ENCODE measurements at regions of chr7 and their contacts with region 1.

Region 1: GRCh38 chr7:38335492-38336147 is 62.2 kb upstream of the TARP start:
- DNase-seq: peak; percentile 90
- ATAC-seq: peak; percentile 69 to 92 (median 79)
- H3K4me3 ChIP-seq: peak overlapping the region; percentile 70
- H3K4me3 Mint-ChIP-seq: peak overlapping the region; percentile 93
- H3K27ac ChIP-seq: peak overlapping the region; percentile 80
- H3K27ac Mint-ChIP-seq: peak overlapping the region; percentile 90 to 93
- H3K4me1 ChIP-seq: peaks cover 38% of the 10 kb centered on the region
- H3K4me1 Mint-ChIP-seq: peaks cover 82 to 87% of the 10 kb centered on the region in 2 donors
- H3K27me3 ChIP-seq: no peaks in the 10 kb centered on the region
- H3K27me3 Mint-ChIP-seq: no peaks in the 10 kb centered on the region
- CTCF ChIP-seq: peak; percentile 98

Region 2: DNA sequence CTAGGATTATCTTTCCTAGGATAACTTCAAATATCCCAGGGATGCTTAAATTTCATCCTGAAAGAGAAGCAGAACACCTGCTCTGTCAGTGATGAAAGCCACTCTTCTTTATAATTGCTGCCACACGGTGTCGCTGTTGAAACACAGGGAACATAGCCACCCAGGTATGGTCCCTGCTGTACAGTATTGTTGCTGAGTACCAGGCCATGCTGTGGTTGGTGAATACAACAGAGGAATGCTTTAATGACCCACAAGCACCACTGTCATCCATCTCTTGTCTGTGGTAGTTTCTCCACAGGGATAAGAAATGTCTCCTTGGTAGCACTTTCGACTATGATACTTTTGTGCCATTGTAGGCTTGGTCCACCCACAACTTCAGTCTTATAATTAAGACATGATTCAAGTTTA is 228.1 kb before region 1 on chr7:
- intact Hi-C with region 1: loop called (anchors 10 kb)
- DNase-seq: peak; percentile 64 to 83
- ATAC-seq: peak; percentile 84 to 90 (median 89)
- H3K4me3 ChIP-seq: no peak overlapping the region
- H3K4me3 Mint-ChIP-seq: no peak overlapping the region
- H3K27ac ChIP-seq: no peak overlapping the region
- H3K27ac Mint-ChIP-seq: no peak overlapping the region
- H3K4me1 ChIP-seq: no peaks in the 10 kb centered on the region
- H3K4me1 Mint-ChIP-seq: no peaks in the 10 kb centered on the region
- H3K27me3 ChIP-seq: no peaks in the 10 kb centered on the region
- H3K27me3 Mint-ChIP-seq: peaks cover 5 to 15% of the 10 kb centered on the region in 2 donors
- CTCF ChIP-seq: peak; percentile 87

Region 3: GRCh38 chr7:38215735-38216670 is 119.6 kb before region 1 on chr7:
- intact Hi-C with region 1: loop called (anchors 1 kb)
- DNase-seq: peak; percentile 78 to 93
- ATAC-seq: peak; percentile 58 to 86 (median 76)
- H3K4me3 ChIP-seq: no peak overlapping the region
- H3K4me3 Mint-ChIP-seq: peak overlapping the region; percentile 80
- H3K27ac ChIP-seq: peak overlapping the region; percentile 67
- H3K27ac Mint-ChIP-seq: peak overlapping the region; percentile 95 to 96
- H3K4me1 ChIP-seq: peaks cover 48% of the 10 kb centered on the region
- H3K4me1 Mint-ChIP-seq: peaks cover 52 to 60% of the 10 kb centered on the region in 2 donors
- H3K27me3 ChIP-seq: no peaks in the 10 kb centered on the region
- H3K27me3 Mint-ChIP-seq: no peaks in the 10 kb centered on the region
- CTCF ChIP-seq: peak; percentile 93

Region 4: DNA sequence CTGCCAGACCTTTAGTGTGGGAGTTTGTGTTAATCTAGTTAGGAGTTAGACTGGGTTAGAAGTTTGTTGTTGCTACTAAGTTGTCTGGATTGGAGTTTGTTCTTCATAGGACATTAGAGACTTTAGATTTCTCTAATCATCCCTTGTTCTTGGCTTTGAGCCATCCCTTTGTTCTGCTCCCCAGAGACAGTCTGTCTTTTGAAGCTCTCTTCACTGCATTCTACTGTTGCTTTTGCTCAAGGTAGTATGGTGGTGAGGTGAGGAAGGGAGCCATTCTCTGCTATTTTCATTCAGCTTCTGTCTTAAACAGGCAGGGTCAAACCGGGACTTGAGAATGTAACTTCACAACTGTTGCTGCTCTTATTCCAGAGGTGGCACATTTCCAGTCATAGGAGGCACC is 51.8 kb before region 1 on chr7:
- intact Hi-C with region 1: loop called (anchors 5 kb)
- DNase-seq: no peak
- ATAC-seq: no peak
- H3K4me3 ChIP-seq: no peak overlapping the region
- H3K4me3 Mint-ChIP-seq: peak overlapping the region; percentile 77
- H3K27ac ChIP-seq: peak overlapping the region; percentile 55
- H3K27ac Mint-ChIP-seq: peak overlapping the region; percentile 96 to 100
- H3K4me1 ChIP-seq: peaks cover 46% of the 10 kb centered on the region
- H3K4me1 Mint-ChIP-seq: peaks cover 64% of the 10 kb centered on the region in 2 donors
- H3K27me3 ChIP-seq: no peaks in the 10 kb centered on the region
- H3K27me3 Mint-ChIP-seq: no peaks in the 10 kb centered on the region
- CTCF ChIP-seq: no peak

Region 5: GRCh38 chr7:38318803-38319416 is 16.7 kb before region 1 on chr7:
- intact Hi-C with region 1: loop called (anchors 1 kb)
- DNase-seq: peak in 1 of 2 donors; percentile 66
- ATAC-seq: peak; percentile 26 to 56 (median 36)
- H3K4me3 ChIP-seq: peak overlapping the region; percentile 69
- H3K4me3 Mint-ChIP-seq: peak overlapping the region; percentile 97
- H3K27ac ChIP-seq: peak overlapping the region; percentile 97
- H3K27ac Mint-ChIP-seq: peak overlapping the region; percentile 95 to 99
- H3K4me1 ChIP-seq: peaks cover 65% of the 10 kb centered on the region
- H3K4me1 Mint-ChIP-seq: peaks cover 90 to 91% of the 10 kb centered on the region in 2 donors
- H3K27me3 ChIP-seq: no peaks in the 10 kb centered on the region
- H3K27me3 Mint-ChIP-seq: no peaks in the 10 kb centered on the region
- CTCF ChIP-seq: peak; percentile 77

Region 6: DNA sequence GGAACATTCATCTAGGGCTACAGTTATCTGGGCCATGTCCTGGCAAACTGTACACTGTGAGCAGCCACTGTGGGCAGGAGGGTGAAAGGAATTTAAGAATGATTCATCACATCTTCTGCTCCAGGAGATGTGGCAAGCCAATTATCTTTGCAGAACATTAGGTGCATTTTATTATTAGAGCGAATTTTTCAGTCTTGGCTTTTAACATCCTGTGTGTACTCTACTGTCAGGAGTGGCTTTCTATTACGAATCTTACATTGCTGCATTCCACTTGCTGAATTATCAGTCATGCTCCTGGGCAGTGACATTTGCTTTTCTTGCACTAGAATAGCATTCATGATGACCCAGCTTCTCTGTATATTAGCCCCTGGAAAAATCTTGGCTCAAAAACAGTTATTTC is 47.1 kb after region 1 on chr7:
- intact Hi-C with region 1: no loop called
- DNase-seq: no peak
- ATAC-seq: no peak
- H3K4me3 ChIP-seq: no peak overlapping the region
- H3K4me3 Mint-ChIP-seq: no peak overlapping the region
- H3K27ac ChIP-seq: no peak overlapping the region
- H3K27ac Mint-ChIP-seq: no peak overlapping the region
- H3K4me1 ChIP-seq: no peaks in the 10 kb centered on the region
- H3K4me1 Mint-ChIP-seq: peaks cover 14 to 16% of the 10 kb centered on the region in 2 donors
- H3K27me3 ChIP-seq: no peaks in the 10 kb centered on the region
- H3K27me3 Mint-ChIP-seq: no peaks in the 10 kb centered on the region
- CTCF ChIP-seq: no peak

Measured in natural killer cell (primary cell).